CD14-positive monocyte (primary cell): ENCODE measurements at regions of chr19 and their contacts with region 1.

Region 1: GRCh38 chr19:14556662-14557188 is 15.1 kb downstream of the NDUFB7 start:
- DNase-seq: peak; percentile 70 to 80 (median 72)
- H3K4me3 ChIP-seq: peak overlapping the region in 1 of 3 experiments; percentile 46
- H3K4me3 Mint-ChIP-seq: peak overlapping the region; percentile 58 to 72
- H3K27ac ChIP-seq: no peak overlapping the region
- H3K27ac Mint-ChIP-seq: peak overlapping the region in 1 of 7 donors; percentile 10
- H3K4me1 ChIP-seq: peaks cover 13 to 14% of the 10 kb centered on the region in 2 donors
- H3K4me1 Mint-ChIP-seq: peaks cover 17% of the 10 kb centered on the region
- H3K27me3 ChIP-seq: no peaks in the 10 kb centered on the region
- H3K27me3 Mint-ChIP-seq: peaks cover 0 to 2% (median 0%) of the 10 kb centered on the region in 3 donors
- CTCF ChIP-seq: peak; percentile 93

Region 2: DNA sequence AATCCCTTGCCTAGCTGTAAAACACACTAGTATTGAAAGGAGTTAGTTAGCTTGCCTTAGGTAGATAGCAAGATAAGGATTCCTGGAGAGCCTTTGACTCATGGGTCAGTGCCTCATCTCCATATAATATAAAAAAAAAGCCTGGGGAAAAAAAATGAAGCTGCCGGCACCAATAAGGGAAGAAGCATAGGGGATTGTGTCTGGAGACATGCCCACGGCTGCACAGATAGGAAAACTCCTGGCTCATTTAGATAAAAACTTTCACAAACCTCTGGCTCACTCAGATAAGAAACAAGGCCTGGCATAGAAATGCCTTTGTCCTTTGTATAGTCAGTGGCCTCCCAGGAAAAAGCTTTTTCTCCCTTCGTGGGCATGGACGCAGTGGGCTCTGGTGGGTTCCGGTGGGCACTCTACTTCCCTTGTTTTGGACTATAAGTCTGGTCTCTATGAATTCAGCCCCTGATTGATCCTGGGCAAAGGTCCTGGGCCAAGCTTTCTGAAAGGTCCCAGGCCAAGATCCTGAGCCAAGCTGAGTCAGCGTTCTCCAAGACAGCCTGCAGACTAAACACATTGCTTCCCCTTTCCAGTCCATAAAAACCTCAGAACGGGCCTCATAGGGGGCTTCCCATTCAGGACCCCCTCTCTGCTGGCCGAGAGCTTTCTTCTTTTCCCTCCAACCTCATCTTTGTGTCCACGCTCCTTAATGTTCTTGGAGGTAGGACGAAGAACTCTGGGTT is 334.1 kb after region 1 on chr19:
- intact Hi-C with region 1: loop called in 1 of 2 experiments (anchors 10 kb)
- DNase-seq: peak in 1 of 3 donors; percentile 11
- H3K4me3 ChIP-seq: no peak overlapping the region
- H3K4me3 Mint-ChIP-seq: no peak overlapping the region
- H3K27ac ChIP-seq: no peak overlapping the region
- H3K27ac Mint-ChIP-seq: peak overlapping the region in 1 of 7 donors; percentile 42
- H3K4me1 ChIP-seq: peaks cover 5 to 6% of the 10 kb centered on the region in 2 donors
- H3K4me1 Mint-ChIP-seq: peaks cover 12% of the 10 kb centered on the region
- H3K27me3 ChIP-seq: no peaks in the 10 kb centered on the region
- H3K27me3 Mint-ChIP-seq: peaks cover 7 to 20% (median 11%) of the 10 kb centered on the region in 3 donors
- CTCF ChIP-seq: no peak